ENCODE measurements at regions of chr7 and their contacts with region 1.

Region 1: DNA sequence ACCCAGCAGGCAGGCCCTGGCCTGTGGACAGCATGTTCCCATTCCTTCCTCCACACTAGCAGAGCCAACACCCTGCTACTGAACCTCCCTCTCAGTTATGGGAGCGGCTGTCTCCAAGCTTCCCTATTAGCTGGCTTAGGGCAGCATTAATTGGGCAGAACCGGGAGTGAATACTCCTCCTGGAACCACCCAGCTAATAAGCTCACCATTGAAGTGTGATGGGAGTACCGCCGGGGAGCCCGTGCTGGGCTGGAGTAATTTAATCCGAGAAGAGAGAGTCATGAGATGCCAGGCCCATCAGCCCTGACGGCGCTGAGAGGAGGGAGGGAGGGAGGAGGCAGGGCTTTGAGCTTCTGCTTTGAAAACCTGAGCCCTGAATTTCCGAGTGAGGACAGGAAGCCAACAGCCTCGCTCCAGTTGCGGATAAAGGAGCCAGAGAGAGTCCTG is 31.8 kb upstream of the ELFN1 start:
- DNase-seq: no peak
- ATAC-seq: no peak
- H3K4me3 ChIP-seq: no peak overlapping the region
- H3K27ac ChIP-seq: no peak overlapping the region
- H3K4me1 ChIP-seq: peaks cover 6% of the 10 kb centered on the region
- H3K27me3 ChIP-seq: no peaks in the 10 kb centered on the region
- CTCF ChIP-seq: no peak

Region 2: GRCh38 chr7:381211-382042 is 1256.8 kb before region 1 on chr7:
- CTCF ChIA-PET with region 1: no interaction called
- POLR2A ChIA-PET with region 1: interaction called, 10 read pairs
- in situ Hi-C with region 1: no loop called
- intact Hi-C with region 1: no loop called
- DNase-seq: no peak
- ATAC-seq: no peak
- H3K4me3 ChIP-seq: no peak overlapping the region
- H3K27ac ChIP-seq: no peak overlapping the region
- H3K4me1 ChIP-seq: peaks cover 4% of the 10 kb centered on the region; the same call in 1 of the 2 replicates
- H3K27me3 ChIP-seq: peaks cover 8% of the 10 kb centered on the region
- CTCF ChIP-seq: no peak

Region 3: GRCh38 chr7:1485156-1485555 is 153.1 kb before region 1 on chr7:
- CTCF ChIA-PET with region 1: interaction called, 12 read pairs
- POLR2A ChIA-PET with region 1: no interaction called
- in situ Hi-C with region 1: no loop called
- intact Hi-C with region 1: no loop called
- DNase-seq: no peak
- ATAC-seq: no peak
- H3K4me3 ChIP-seq: no peak overlapping the region
- H3K27ac ChIP-seq: no peak overlapping the region
- H3K4me1 ChIP-seq: no peaks in the 10 kb centered on the region
- H3K27me3 ChIP-seq: no peaks in the 10 kb centered on the region
- CTCF ChIP-seq: no peak

Region 4: DNA sequence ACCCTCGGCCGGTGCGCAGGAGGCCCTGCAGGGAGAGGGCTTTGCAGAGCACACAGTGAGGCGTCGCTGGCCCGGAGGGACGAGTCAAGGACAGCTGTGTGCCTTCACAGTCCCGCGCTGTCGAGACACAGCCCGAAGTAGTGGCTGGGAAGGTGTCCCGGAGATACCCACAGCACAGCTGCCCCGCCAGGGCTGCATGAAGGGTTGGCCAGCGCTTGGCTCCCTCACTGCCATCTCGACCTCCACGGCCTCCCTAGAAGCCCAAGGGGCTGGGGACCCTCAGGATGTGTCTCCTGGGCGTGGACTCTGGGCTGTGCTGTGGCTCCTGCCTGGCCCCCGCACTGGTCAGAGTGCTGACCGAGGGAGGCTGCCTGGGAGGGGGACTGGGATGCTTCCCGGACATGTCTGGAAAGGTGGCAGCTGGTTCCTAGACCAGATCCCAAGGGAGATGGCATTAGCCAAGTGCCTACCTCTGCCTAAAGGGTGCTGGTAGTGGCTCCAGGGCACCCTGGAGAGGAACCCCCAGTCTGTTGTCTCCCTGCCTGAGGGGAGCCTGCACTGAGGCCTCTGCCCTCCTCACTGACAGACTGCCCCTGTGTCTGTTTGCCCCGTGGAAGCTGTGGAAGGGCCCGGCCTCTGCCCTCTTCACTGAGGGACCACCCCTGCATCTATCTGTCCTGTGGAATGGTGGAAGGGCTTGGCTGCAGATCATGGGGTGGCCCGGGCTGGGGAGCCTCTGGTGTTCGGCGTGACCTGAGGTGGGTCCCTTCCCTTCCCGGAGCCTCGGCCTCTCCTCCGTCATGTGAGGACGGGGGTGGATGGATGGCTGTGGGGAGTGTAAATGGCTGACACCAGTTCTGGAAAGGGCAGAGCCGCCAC is 37.7 kb after region 1 on chr7:
- CTCF ChIA-PET with region 1: no interaction called
- POLR2A ChIA-PET with region 1: no interaction called
- in situ Hi-C with region 1: no loop called
- intact Hi-C with region 1: no loop called
- DNase-seq: no peak
- ATAC-seq: no peak
- H3K4me3 ChIP-seq: no peak overlapping the region
- H3K27ac ChIP-seq: no peak overlapping the region
- H3K4me1 ChIP-seq: peaks cover 13% of the 10 kb centered on the region
- H3K27me3 ChIP-seq: no peaks in the 10 kb centered on the region
- CTCF ChIP-seq: no peak

Region 5: DNA sequence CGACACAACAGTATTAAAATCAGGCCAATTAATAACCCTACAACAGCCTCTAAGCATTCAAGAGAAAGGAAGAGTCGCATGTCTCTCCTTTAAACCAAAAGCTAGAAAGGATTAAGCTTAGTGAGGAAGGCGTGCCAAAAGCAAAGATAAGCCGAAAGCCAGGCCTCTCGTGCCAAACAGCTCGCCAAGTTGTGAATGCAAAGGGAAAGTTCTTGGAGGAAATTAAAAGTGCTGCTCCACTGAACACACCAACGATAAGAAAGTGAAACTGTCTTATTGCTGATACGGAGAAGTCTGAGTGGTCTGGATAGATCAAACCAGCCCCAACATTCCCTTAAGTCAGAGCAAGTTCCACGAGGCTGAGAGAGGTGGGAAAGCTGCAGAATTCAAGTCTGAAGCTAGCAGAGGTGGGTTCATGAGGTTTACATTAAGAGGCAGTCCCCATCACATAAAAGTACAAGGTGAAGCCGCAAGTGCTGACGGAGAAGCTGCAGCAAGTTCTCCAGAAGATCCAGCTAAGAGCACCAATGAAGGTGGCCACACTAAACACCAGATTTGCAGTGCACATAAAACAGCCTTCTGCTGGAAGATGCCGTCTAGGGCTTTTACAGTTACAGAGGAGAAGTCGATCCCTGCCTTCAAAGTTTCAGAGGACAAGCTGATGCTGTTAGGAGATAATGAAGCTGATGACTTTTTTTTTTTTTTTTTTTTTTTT is 399.7 kb after region 1 on chr7:
- CTCF ChIA-PET with region 1: no interaction called
- POLR2A ChIA-PET with region 1: no interaction called
- in situ Hi-C with region 1: no loop called
- intact Hi-C with region 1: no loop called
- DNase-seq: no peak
- ATAC-seq: no peak
- H3K4me3 ChIP-seq: no peak overlapping the region
- H3K27ac ChIP-seq: no peak overlapping the region
- H3K4me1 ChIP-seq: no peaks in the 10 kb centered on the region
- H3K27me3 ChIP-seq: no peaks in the 10 kb centered on the region
- CTCF ChIP-seq: no peak

Measured in Panc1 (cell line).